T-cell (primary cell): ENCODE measurements at regions of chr9 and their contacts with region 1.

Region 1: DNA sequence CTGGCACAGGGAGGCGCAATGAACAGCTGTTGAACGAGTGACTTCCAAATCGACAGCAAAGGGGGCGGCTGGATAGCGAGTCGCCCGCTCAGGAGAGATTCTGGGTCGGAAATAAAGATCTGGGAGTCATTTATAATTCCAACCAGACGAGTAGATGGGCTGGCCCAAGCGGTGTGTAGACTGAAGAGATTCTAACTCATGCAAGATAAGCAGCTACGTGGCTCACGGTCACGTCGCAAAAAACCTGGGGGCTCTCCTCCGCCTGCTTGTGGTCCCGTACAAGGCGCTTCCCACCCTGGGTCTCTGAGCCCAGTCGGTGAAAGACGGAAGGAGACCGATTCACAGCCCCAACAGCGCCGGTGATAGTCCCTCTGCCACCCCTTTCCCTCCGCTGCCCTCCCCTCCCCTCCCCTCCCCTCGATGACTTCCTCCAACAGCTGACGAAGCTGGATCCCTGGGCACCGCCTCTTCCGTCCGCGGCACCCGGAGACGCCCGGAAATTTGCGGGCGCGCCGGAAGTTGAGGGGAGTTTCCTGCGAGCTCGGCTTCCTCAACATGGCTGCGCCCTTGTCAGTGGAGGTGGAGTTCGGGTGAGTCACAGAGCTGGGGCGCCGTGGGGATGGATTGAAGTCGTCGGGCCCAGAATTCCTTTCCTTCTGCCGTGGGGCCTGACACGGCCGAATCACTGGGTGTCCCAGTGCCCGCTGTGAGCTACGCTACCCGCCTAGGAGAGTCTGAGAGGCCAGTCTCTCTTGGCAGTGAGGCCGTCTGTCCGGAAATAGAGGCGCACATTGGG is at the start of gene URM1:
- DNase-seq: peak; percentile 92 to 98 (median 96)
- ATAC-seq: peak; percentile 95 to 98 (median 96)
- H3K4me3 ChIP-seq: peak within 1 kb of the TSS; percentile 82 to 89
- H3K4me3 Mint-ChIP-seq: peak within 1 kb of the TSS; percentile 87 to 95 (median 95)
- H3K27ac ChIP-seq: peak within 1 kb of the TSS; percentile 82
- H3K27ac Mint-ChIP-seq: peak within 1 kb of the TSS; percentile 96 to 97
- H3K4me1 ChIP-seq: peaks cover 6 to 29% of the 10 kb centered on the region in 2 experiments
- H3K4me1 Mint-ChIP-seq: peaks cover 37 to 42% (median 38%) of the 10 kb centered on the region in 3 donors
- H3K27me3 ChIP-seq: peaks cover 0 to 4% of the 10 kb centered on the region in 2 experiments
- H3K27me3 Mint-ChIP-seq: no peaks in the 10 kb centered on the region
- total RNA-seq, gene URM1: 38.7 to 55.8 (median 52.5) TPM

Region 2: DNA sequence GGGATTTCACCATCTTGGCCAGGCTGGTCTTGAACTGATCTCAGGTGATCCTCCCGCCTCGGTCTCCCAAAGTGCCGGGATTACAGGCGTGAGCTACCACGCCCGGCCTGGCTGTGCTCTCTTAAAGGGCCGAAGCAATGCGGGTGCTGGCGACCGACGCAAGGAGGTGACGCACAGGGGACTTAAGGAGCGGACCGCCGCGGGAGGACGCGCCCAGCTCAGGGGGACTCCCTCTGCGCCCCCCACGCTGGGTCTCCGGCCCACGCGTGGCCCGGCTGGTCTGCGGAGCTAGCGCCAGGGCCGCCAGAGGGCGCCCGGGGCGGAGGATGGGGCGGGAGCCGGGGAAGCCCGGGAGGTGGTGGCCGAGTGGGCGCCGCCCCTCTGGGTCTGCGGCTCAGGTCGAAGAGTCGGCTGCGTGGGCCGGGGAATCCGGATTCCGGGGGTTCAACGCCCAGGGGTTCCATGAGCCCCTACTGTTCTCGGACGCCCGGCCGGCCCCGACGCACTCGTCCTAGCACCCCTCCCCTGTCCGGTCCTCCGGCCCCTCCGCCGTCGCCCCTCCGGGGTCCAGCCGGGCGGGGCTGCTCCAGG is 49.1 kb after region 1 on chr9:
- CTCF ChIA-PET with region 1: interaction called in 1 of 2 experiments, 11 read pairs
- POLR2A ChIA-PET with region 1: no interaction called
- DNase-seq: peak in 33 of 35 experiments; percentile 10 to 79 (median 45)
- ATAC-seq: peak; percentile 84 to 88 (median 87)
- H3K4me3 ChIP-seq: peak overlapping the region; percentile 52 to 70
- H3K4me3 Mint-ChIP-seq: peak overlapping the region; percentile 69 to 80 (median 79)
- H3K27ac ChIP-seq: no peak overlapping the region
- H3K27ac Mint-ChIP-seq: no peak overlapping the region
- H3K4me1 ChIP-seq: peaks cover 0 to 27% of the 10 kb centered on the region in 2 experiments
- H3K4me1 Mint-ChIP-seq: peaks cover 8 to 13% (median 12%) of the 10 kb centered on the region in 3 donors
- H3K27me3 ChIP-seq: peaks cover 6 to 58% of the 10 kb centered on the region in 2 experiments
- H3K27me3 Mint-ChIP-seq: peaks cover 26 to 30% of the 10 kb centered on the region in 2 donors